ENCODE measurements at regions of chr15 and their contacts with region 1.

Region 1: DNA sequence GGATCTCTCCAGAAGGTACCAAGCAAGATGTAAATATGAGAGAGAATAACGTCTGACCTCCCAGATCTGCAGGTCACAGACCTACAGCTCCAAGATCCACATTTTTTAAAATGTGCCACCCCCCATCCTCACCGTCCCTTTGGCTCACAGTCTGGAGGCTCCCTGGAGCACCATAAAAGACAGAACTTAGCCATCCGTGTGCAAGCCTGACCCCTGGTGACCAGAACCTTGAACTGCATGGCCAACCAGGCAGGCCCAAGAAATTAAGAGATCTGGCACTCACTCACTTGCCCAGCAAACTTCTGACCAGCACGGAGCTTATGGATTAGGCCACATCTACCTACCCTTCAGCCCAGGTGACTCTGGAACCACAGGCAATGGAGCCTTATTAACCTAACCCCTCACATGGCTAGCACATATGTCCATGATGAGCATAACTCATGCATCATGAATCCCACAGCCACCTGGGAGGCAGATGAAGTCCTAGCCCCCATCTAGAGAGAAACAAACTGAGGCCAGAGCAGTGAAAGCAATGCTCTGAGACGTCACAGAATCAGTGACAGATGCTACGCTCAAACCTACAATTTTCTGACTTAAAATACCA is 275.3 kb downstream of the UACA start:
- DNase-seq: peak; percentile 89
- H3K4me3 ChIP-seq: no peak overlapping the region
- H3K27ac ChIP-seq: peak overlapping the region in 1 of 8 donors; percentile 85
- H3K4me1 ChIP-seq: peaks cover 20 to 98% (median 56%) of the 10 kb centered on the region in 6 donors
- H3K27me3 ChIP-seq: peaks cover 0 to 6% (median 0%) of the 10 kb centered on the region in 7 donors
- CTCF ChIP-seq: peak; percentile 92 to 99 (median 97)
- POLR2A ChIP-seq: no peak

Region 2: DNA sequence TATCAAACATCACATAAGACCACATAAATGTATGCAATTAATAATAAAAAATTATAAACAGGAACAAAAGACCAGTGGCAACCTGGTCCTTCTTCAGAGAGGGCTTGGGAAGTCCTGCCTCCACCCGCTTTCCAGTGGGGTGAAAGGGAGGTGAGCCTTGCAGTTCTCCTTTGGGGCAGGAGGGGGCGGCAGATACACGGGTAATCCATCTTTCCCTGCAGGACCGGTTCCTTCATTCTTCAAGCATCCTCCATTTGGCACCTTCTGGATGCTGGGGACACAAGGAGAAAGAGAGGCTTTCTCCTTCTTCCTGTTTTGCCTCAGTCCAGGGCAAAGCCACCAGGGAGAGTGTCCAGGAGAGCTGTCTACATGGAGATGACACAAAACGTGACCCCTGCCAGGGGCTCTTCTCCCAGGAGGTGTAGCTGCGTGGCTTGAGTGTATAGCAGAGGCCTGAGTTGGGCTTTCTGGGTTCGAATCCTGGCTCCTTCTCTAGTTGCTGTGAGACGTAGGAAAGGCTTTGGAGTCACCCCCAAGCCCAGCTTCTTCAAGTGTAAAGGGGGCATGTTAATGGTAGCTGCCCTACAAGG is 1012.2 kb before region 1 on chr15:
- intact Hi-C with region 1: loop called (anchors 10 kb)
- DNase-seq: peak; percentile 89
- H3K4me3 ChIP-seq: no peak overlapping the region
- H3K27ac ChIP-seq: no peak overlapping the region
- H3K4me1 ChIP-seq: peaks cover 0 to 4% (median 0%) of the 10 kb centered on the region in 6 donors
- H3K27me3 ChIP-seq: peaks cover 0 to 47% (median 0%) of the 10 kb centered on the region in 7 donors
- CTCF ChIP-seq: peak; percentile 87 to 98 (median 95)
- POLR2A ChIP-seq: no peak

Region 3: GRCh38 chr15:69576035-69576526 is 912.0 kb before region 1 on chr15:
- intact Hi-C with region 1: loop called (anchors 5 kb)
- DNase-seq: peak; percentile 91
- H3K4me3 ChIP-seq: no peak overlapping the region
- H3K27ac ChIP-seq: no peak overlapping the region
- H3K4me1 ChIP-seq: peaks cover 0 to 36% (median 12%) of the 10 kb centered on the region in 6 donors
- H3K27me3 ChIP-seq: peaks cover 0 to 37% (median 0%) of the 10 kb centered on the region in 7 donors
- CTCF ChIP-seq: peak; percentile 54 to 89 (median 83)
- POLR2A ChIP-seq: no peak